Right lobe of liver (tissue), 6 donors: ENCODE measurements at regions of chr1 and their contacts with region 1.

Region 1: DNA sequence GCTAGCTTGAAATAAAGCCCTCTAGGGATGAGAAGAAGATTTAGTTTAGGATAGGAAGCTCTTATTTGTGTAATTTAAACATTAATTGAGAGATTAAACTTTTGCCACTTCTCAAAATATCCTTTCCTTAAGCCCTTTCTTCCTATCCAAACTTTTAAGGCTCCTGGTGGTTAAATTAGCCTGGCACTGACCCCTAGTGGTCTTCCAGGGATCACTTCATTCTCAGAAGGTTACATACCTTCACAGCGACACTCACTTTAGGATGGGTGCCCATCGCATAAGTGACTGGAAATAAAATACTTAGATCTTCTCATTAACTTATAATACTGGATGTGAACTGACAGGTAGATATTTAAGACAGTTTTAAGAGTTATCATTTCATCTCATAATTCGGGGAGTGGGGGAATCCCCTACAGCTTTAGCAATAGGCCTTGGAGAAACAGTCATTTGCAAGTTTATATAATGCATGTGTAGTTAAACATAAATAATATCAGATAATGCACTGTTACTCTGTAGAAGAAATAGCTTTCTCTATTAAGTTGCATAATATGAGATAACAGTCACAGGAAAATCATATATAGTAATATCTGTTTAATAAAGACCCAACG is 7.4 kb downstream of the LHX9 start:
- DNase-seq: no peak
- ATAC-seq: peak; percentile 72 to 82 (median 80)
- H3K4me3 ChIP-seq: no peak overlapping the region
- H3K27ac ChIP-seq: no peak overlapping the region
- H3K4me1 ChIP-seq: peaks cover 0 to 7% (median 0%) of the 10 kb centered on the region in 4 donors
- H3K27me3 ChIP-seq: peaks cover 6 to 15% of the 10 kb centered on the region in 2 donors
- CTCF ChIP-seq: peak; percentile 68 to 84 (median 74)
- POLR2A ChIP-seq: no peak

Region 2: DNA sequence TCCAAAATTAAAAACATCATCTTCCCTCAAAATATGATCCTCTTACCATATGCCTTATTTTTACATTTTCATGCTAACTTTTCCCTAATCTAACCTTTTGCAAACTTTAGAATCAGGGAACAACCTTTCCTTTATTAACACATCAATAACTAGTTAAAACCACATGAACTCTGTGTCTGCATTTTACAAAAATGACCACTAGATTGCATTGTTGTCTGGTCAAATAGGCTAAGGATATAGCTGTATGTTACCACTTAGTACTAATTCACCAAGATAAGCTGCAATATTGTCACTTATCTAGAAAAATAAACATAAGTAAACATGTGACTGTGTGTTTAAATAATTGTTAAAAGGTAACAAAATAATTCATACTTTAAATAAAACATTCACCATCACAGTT is 231.7 kb before region 1 on chr1:
- intact Hi-C with region 1: loop called in 1 of 2 experiments (anchors 10 kb)
- DNase-seq: no peak
- ATAC-seq: peak; percentile 65 to 81 (median 68)
- H3K4me3 ChIP-seq: no peak overlapping the region
- H3K27ac ChIP-seq: no peak overlapping the region
- H3K4me1 ChIP-seq: peaks cover 0 to 34% (median 8%) of the 10 kb centered on the region in 4 donors
- H3K27me3 ChIP-seq: no peaks in the 10 kb centered on the region
- CTCF ChIP-seq: peak in 3 of 4 donors; percentile 32 to 43 (median 42)
- POLR2A ChIP-seq: no peak

Region 3: GRCh38 chr1:198107041-198107440 is 182.4 kb after region 1 on chr1:
- intact Hi-C with region 1: no loop called
- DNase-seq: no peak
- ATAC-seq: no peak
- H3K4me3 ChIP-seq: no peak overlapping the region
- H3K27ac ChIP-seq: no peak overlapping the region
- H3K4me1 ChIP-seq: peaks cover 0 to 3% (median 0%) of the 10 kb centered on the region in 4 donors
- H3K27me3 ChIP-seq: no peaks in the 10 kb centered on the region
- CTCF ChIP-seq: no peak
- POLR2A ChIP-seq: no peak